CD4-positive, alpha-beta T cell (primary cell): ENCODE measurements at regions of chr12 and their contacts with region 1.

Region 1: DNA sequence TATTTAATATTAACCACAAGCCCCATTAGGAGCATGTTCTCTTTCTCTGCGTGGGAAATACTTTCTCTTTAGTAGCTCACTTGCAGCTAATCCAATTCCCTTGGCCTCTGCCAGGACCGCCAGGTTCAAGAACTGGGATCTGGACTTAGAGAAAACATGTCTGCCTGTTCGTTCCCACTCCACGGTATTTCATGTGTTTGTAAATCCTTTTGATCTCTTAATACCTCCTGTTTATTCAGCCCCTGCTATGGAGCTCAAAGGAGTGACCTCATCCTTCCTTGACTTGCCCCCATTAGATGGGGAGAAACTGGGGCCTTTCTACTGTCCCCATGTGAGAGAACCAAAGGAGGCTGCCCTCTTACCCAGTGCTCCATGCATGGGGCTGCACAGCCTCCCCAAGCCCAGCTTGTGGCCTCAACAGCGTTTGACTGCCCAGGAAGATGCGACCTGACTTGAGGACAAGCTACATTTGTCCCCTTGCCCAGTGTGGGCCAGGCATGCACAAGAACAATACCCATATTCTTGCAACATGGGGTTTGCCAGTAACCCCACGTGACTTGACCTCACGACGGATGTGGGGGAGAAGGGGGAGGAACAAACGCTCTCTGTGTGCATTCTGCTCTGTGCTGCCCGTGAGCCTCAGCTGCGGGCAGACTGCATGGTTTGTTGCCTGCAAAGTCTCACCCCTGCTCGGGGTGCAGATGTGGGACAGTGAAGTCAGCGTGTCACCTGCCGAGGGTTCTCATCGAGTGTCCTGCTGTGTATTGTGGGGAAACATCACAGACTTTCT is 30.3 kb downstream of the CD9 start:
- DNase-seq: peak; percentile 45 to 90 (median 65)
- ATAC-seq: peak; percentile 97
- H3K4me3 ChIP-seq: no peak overlapping the region
- H3K4me3 Mint-ChIP-seq: peak overlapping the region; percentile 39
- H3K27ac ChIP-seq: peak overlapping the region in 1 of 2 donors; percentile 59
- H3K27ac Mint-ChIP-seq: peak overlapping the region; percentile 90
- H3K4me1 ChIP-seq: peaks cover 36% of the 10 kb centered on the region
- H3K4me1 Mint-ChIP-seq: peaks cover 43% of the 10 kb centered on the region
- H3K27me3 ChIP-seq: no peaks in the 10 kb centered on the region
- H3K27me3 Mint-ChIP-seq: no peaks in the 10 kb centered on the region
- CTCF ChIP-seq: no peak

Region 2: DNA sequence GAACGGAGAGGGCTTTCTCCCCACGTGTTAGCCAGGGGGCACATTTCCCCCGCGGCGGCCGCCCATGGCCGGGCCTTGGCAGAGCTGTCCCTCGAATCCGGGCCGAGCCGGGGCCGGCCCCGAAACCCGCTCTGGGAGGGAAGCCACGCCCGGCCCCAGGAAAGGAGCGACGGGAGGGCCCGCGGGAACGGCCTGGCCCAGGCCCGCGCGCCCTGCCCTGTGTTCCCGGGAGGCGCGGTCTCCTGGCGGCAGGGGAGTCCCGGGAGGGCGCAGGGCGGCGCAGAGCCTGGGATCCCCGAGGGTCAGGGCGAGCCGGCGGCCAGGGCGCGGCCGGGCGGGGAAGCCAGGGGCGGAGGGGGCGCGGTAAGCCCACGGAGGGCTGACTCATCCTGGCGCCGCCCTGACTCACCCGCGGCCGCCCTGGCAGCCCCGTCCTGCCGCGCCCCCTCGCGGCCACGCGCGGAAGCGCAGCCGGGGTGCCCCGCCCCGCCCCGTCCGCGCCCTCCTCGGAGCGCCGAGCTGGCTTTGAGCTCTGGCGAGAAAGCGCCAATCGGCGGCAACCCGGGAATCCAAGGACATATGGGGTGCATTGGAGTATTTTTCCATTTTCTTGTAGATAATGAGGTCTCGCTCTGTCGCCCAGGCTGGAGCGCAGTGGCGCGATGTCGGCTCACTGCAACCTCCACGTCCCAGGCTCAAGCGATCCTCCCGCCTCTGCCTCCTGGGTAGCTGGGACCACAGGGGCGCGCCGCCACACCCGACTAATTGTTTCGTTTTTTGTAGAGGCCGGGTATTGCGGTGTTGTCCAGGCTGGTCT is 48.1 kb after region 1 on chr12:
- CTCF ChIA-PET with region 1: interaction called, 3 read pairs
- POLR2A ChIA-PET with region 1: no interaction called
- intact Hi-C with region 1: loop called (anchors 1 to 5 kb)
- DNase-seq: peak; percentile 60 to 92 (median 82)
- ATAC-seq: peak; percentile 97
- H3K4me3 ChIP-seq: peak overlapping the region; percentile 42
- H3K4me3 Mint-ChIP-seq: peak overlapping the region; percentile 81
- H3K27ac ChIP-seq: no peak overlapping the region
- H3K27ac Mint-ChIP-seq: no peak overlapping the region
- H3K4me1 ChIP-seq: peaks cover 12% of the 10 kb centered on the region
- H3K4me1 Mint-ChIP-seq: peaks cover 6% of the 10 kb centered on the region
- H3K27me3 ChIP-seq: peaks cover 6 to 12% of the 10 kb centered on the region in 2 experiments
- H3K27me3 Mint-ChIP-seq: peaks cover 35% of the 10 kb centered on the region
- CTCF ChIP-seq: peak; percentile 57